IMR-90 (cell line): ENCODE measurements at regions of chr18 and their contacts with region 1.

Region 1: DNA sequence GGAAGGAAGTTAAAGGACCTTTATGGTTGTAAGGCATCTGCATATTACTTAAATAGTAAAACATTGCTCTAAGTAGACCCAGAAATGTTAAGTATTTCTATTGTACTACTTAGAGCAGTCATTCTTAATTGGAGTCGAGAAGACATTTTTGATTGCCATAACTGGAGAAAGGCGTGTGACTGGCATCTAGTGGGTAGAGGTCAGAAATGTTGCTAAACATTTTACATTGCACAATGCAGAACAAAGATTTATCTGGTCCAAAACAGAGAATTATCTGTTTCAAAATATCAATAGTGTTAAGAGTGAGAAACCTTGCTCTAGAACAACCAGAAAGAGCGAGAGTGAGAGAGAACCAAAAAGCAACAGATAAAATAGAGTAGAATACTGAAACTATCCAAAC is 23.3 kb upstream of the ROCK1 start:
- DNase-seq: peak; percentile 7
- ATAC-seq: no peak
- H3K4me3 ChIP-seq: no peak overlapping the region
- H3K27ac ChIP-seq: no peak overlapping the region
- H3K4me1 ChIP-seq: peaks cover 3% of the 10 kb centered on the region; the same call in 1 of the 2 replicates
- H3K27me3 ChIP-seq: no peaks in the 10 kb centered on the region
- CTCF ChIP-seq: 0 out of 2 replicates have a peak, but pooled peaks have one; percentile 21
- POLR2A ChIP-seq: no peak
- RAD21 ChIP-seq: peak; percentile 23; the same call in 1 of the 2 replicates

Region 2: DNA sequence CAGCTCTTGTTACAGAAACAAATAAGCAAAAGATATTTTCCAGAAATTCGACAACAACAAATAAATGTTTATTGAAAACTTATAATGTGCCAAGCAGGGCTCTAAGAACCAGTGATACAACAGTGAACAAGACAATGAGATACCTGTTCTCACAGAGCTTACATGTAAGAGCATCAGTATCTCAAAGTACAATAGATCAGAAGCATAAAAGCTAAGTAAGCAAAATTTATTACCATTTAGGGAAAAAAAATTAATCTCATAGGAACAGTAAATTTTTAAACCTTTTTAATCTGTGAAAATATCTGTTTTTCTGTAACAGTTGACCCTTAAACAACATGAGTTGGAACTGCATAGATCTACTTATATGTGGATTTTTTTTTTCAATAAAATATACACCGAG is 44.2 kb before region 1 on chr18:
- CTCF ChIA-PET with region 1: no interaction called
- POLR2A ChIA-PET with region 1: no interaction called
- dilution Hi-C with region 1: no loop called
- in situ Hi-C with region 1: no loop called
- intact Hi-C with region 1: loop called (anchors 5 kb)
- DNase-seq: no peak
- ATAC-seq: no peak
- H3K4me3 ChIP-seq: no peak overlapping the region
- H3K27ac ChIP-seq: no peak overlapping the region
- H3K4me1 ChIP-seq: no peaks in the 10 kb centered on the region
- H3K27me3 ChIP-seq: no peaks in the 10 kb centered on the region
- CTCF ChIP-seq: no peak
- POLR2A ChIP-seq: no peak
- RAD21 ChIP-seq: no peak

Region 3: GRCh38 chr18:21327101-21327500 is 192.2 kb after region 1 on chr18:
- CTCF ChIA-PET with region 1: no interaction called
- POLR2A ChIA-PET with region 1: no interaction called
- dilution Hi-C with region 1: no loop called
- in situ Hi-C with region 1: no loop called
- intact Hi-C with region 1: loop called (anchors 10 kb)
- DNase-seq: no peak
- ATAC-seq: no peak
- H3K4me3 ChIP-seq: no peak overlapping the region
- H3K27ac ChIP-seq: no peak overlapping the region
- H3K4me1 ChIP-seq: no peaks in the 10 kb centered on the region
- H3K27me3 ChIP-seq: peaks cover 4% of the 10 kb centered on the region
- CTCF ChIP-seq: no peak
- POLR2A ChIP-seq: no peak
- RAD21 ChIP-seq: no peak

Region 4: GRCh38 chr18:21369146-21369545 is 234.2 kb after region 1 on chr18:
- CTCF ChIA-PET with region 1: no interaction called
- POLR2A ChIA-PET with region 1: no interaction called
- dilution Hi-C with region 1: no loop called
- in situ Hi-C with region 1: no loop called
- intact Hi-C with region 1: no loop called
- DNase-seq: no peak
- ATAC-seq: no peak
- H3K4me3 ChIP-seq: no peak overlapping the region
- H3K27ac ChIP-seq: no peak overlapping the region
- H3K4me1 ChIP-seq: no peaks in the 10 kb centered on the region
- H3K27me3 ChIP-seq: peaks cover 3% of the 10 kb centered on the region; the same call in 1 of the 2 replicates
- CTCF ChIP-seq: no peak
- POLR2A ChIP-seq: no peak
- RAD21 ChIP-seq: no peak